ENCODE measurements at regions of chr5 and their contacts with region 1.

Region 1: DNA sequence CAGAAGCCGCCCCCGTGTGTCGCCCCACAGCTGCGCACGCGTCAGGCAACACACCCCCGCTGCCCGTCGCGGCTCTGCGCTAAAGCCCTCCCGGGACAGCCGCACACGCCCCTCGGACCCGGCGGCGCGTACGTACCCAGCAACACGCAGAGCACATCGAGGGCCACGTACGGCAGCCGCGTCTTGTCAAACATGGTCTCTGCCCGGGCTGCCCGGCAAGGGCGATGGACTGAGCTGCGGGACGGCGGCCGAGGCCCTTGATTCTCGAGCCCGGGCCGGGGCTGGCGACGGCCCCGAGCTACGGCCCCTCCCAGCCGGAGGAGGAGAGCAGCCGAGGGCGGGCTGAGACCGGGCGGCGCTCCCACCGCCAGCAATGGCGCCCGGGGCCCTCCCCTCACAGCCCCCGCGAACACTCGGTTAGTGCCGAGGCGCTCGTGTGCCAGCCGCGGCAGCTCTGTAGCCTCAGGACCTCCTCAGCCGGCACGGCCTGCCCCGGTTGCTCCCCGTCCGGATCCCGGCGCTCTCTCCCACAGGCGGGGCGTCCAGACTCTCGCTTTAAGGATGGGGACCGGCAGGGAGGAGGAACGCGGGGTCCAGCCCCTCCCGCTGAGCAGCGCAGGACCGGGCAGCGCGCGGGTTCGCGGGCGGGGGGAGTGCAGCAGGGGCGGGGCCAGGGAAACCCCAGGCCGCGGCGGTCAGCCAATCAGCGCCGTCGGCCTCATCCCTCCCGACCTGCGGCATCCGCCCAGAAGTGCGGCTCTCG is at the start of gene PLPP1:
- DNase-seq: peak; percentile 94
- ATAC-seq: peak; percentile 95 to 97
- total RNA-seq, gene PLPP1: 56.8 to 87.8 TPM

Region 2: GRCh38 chr5:55427157-55427556 is 107.5 kb before region 1 on chr5:
- intact Hi-C with region 1: loop called in 1 of 2 experiments (anchors 5 kb)
- DNase-seq: peak; percentile 45
- ATAC-seq: peak; percentile 83 to 88

Region 3: DNA sequence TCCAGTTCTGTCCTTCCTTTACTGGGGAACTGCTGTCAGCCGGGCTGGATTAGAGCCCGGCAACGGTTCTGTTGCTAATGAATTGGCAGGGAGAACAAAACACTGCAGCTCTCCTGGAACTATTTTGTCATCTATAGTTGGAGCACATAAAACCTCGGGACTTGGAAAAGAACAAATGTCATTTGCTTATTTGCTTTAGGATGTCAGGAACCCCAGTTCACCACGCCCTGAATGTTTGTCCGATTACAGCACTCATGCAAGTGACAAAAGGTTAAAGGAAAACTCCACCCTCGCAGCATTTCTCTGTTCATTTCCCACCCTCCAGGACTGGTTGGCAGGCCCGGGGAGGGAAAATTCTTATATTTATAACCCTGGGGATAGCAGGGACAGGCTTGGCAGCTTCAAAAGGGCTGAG is 66.6 kb after region 1 on chr5:
- intact Hi-C with region 1: loop called in 1 of 2 experiments (anchors 5 kb)
- DNase-seq: peak; percentile 85
- ATAC-seq: peak; percentile 80

Region 4: GRCh38 chr5:55636683-55637082 is 102.1 kb after region 1 on chr5:
- intact Hi-C with region 1: loop called in 1 of 2 experiments (anchors 10 kb)
- DNase-seq: no peak
- ATAC-seq: peak; percentile 45 to 74

Region 5: DNA sequence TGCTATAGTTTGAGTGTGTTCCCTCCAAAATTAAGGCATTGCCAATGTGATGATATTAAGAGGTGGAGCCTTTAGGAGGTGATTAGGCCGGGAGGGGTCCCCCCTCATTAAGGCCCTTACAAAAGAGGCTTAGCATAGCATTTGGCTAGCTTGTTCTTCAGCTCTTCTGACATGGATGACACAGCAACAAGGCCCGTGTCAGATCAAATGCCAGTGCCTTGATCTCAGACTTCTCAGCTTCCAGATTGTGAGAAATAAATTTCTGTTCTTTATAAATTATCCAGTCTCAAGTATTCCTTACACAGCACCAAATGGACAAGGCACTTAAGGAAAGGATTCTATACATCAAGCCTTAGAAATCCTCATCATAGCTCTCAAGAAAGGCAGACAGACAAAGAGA is 145.7 kb after region 1 on chr5:
- intact Hi-C with region 1: loop called in 1 of 2 experiments (anchors 10 kb)
- DNase-seq: no peak
- ATAC-seq: peak in 1 of 2 donors; percentile 36

Measured in left cardiac atrium (tissue), 4 donors.